Heart left ventricle (tissue), 16 donors: ENCODE measurements at regions of chr11 and their contacts with region 1.

Region 1: DNA sequence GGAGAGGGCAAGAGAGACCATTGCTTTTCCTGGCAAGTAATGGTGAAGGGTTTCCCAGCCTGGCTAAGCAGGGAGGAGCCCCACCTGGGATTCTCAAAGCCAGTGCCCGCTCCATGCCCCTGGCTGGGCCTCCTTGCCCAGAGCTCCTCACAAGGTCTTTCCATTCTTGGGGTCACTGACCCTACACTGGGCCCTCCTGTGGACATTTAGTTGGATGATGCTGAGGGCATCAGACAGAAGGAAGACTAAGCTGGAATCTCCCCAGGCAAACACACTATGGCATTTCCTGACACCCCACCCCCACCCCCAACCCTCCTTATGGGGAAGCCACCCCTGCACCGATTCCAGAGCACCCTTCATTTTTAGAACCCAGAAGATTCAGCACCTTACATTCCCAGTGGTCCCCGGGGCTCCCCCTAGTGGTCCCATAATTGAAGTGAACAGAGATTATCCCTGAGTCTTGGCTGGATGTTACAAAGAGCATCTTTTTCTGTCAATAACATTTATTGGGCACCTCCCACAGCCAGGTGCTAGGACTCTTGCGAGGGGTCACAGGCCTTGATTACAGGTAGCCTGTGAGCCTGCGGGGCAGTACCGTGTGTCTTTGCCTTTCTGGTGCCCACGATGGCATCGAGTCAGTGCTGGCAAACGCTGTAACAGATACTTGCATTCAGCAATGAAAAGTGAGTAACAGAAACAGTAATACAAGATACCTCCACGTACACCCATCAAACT is 548.5 kb downstream of the BUD13 start:
- DNase-seq: peak in 2 of 5 donors; percentile 36 to 63
- ATAC-seq: peak in 3 of 4 donors; percentile 38 to 65 (median 53)
- H3K4me3 ChIP-seq: no peak overlapping the region
- H3K27ac ChIP-seq: no peak overlapping the region
- H3K4me1 ChIP-seq: peaks cover 0 to 16% (median 0%) of the 10 kb centered on the region in 12 donors
- H3K27me3 ChIP-seq: peaks cover 0 to 3% (median 0%) of the 10 kb centered on the region in 9 donors
- CTCF ChIP-seq: peak; percentile 55 to 77 (median 68)
- POLR2A ChIP-seq: no peak

Region 2: DNA sequence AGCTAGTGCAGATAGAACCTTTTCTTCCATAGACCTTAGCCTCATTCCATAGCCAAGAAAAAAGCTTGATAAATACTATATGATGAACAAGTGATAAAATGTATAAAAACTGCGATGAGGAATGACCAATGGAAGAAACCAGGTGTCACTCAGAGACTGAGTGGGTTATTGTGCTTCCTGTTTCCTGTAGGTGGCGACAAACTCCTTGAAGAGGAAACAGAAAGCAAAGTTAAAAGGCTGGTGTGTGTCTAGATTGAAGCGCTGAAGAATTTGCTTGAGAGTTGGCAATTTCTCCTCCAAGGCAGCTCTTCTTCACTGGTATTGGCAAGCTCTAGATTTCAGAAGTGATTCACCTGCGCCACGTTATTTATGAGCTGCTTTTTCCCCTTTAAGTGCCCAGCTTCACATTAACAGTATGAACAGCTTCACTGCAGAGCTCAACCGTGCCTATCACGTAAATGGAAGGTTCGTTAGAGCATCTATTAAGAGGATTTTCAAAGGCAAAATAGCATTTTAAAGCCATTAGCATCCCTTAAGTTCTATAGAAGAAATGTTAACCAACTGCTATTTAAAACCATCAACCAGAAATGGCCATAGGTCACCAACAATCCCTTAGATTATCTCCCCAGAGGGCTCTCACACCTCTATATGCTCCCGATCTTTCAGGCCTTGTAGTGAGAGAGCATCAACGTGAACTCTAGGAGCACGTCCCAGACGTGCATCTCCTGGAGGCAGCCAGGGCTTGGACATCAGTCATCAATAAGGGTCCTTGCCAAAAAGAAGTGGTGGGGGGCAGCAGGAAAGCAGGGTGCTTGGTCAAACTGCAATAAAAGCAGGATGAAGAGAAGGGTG is 899.5 kb before region 1 on chr11:
- intact Hi-C with region 1: loop called in 3 of 10 experiments (anchors 5 to 10 kb)
- DNase-seq: peak in 1 of 5 donors; percentile 20
- ATAC-seq: peak; percentile 61 to 90 (median 78)
- H3K4me3 ChIP-seq: peak overlapping the region in 3 of 12 donors; percentile 8 to 37 (median 14)
- H3K27ac ChIP-seq: no peak overlapping the region
- H3K4me1 ChIP-seq: peaks cover 0 to 8% (median 0%) of the 10 kb centered on the region in 12 donors
- H3K27me3 ChIP-seq: no peaks in the 10 kb centered on the region
- CTCF ChIP-seq: peak; percentile 67 to 85 (median 78)
- POLR2A ChIP-seq: no peak

Region 3: GRCh38 chr11:115980337-115981103 is 243.8 kb before region 1 on chr11:
- intact Hi-C with region 1: loop called in 1 of 10 experiments (anchors 5 kb)
- DNase-seq: peak in 1 of 5 donors; percentile 31
- ATAC-seq: no peak
- H3K4me3 ChIP-seq: no peak overlapping the region
- H3K27ac ChIP-seq: peak overlapping the region in 2 of 12 donors; percentile 24
- H3K4me1 ChIP-seq: peaks cover 0 to 33% (median 0%) of the 10 kb centered on the region in 12 donors
- H3K27me3 ChIP-seq: peaks cover 0 to 9% (median 0%) of the 10 kb centered on the region in 9 donors
- CTCF ChIP-seq: no peak
- POLR2A ChIP-seq: no peak

Region 4: GRCh38 chr11:115990004-115990447 is 234.3 kb before region 1 on chr11:
- intact Hi-C with region 1: loop called in 6 of 10 experiments (anchors 2 to 10 kb)
- DNase-seq: peak in 2 of 5 donors; percentile 28 to 44
- ATAC-seq: peak in 3 of 4 donors; percentile 66 to 81 (median 75)
- H3K4me3 ChIP-seq: peak overlapping the region in 7 of 12 donors; percentile 12 to 38 (median 22)
- H3K27ac ChIP-seq: no peak overlapping the region
- H3K4me1 ChIP-seq: peaks cover 0 to 4% (median 0%) of the 10 kb centered on the region in 12 donors
- H3K27me3 ChIP-seq: peaks cover 0 to 3% (median 0%) of the 10 kb centered on the region in 9 donors
- CTCF ChIP-seq: peak; percentile 56 to 85 (median 72)
- POLR2A ChIP-seq: no peak

Region 5: GRCh38 chr11:116461789-116462188 is 237.5 kb after region 1 on chr11:
- intact Hi-C with region 1: no loop called
- DNase-seq: no peak
- ATAC-seq: no peak
- H3K4me3 ChIP-seq: no peak overlapping the region
- H3K27ac ChIP-seq: peak overlapping the region in 1 of 12 donors; percentile 51
- H3K4me1 ChIP-seq: no peaks in the 10 kb centered on the region
- H3K27me3 ChIP-seq: peaks cover 0 to 13% (median 0%) of the 10 kb centered on the region in 9 donors
- CTCF ChIP-seq: no peak
- POLR2A ChIP-seq: no peak